Common myeloid progenitor, CD34-positive (primary cell): ENCODE measurements at regions of chr10 and their contacts with region 1.

Region 1: GRCh38 chr10:50624866-50625692 is 1.3 kb upstream of the SGMS1 start:
- DNase-seq: peak; percentile 85 to 92 (median 89)
- H3K4me3 ChIP-seq: peak overlapping the region; percentile 70 to 98 (median 83)
- H3K27ac ChIP-seq: peak overlapping the region; percentile 58 to 97
- H3K4me1 ChIP-seq: peaks cover 23 to 43% (median 35%) of the 10 kb centered on the region in 4 experiments
- H3K27me3 ChIP-seq: no peaks in the 10 kb centered on the region

Region 2: GRCh38 chr10:50577681-50578350 is 47.3 kb before region 1 on chr10:
- CTCF ChIA-PET with region 1: interaction called, 22 read pairs
- POLR2A ChIA-PET with region 1: no interaction called
- DNase-seq: peak; percentile 61 to 88 (median 78)
- H3K4me3 ChIP-seq: peak overlapping the region in 2 of 7 experiments; percentile 8
- H3K27ac ChIP-seq: peak overlapping the region; percentile 4 to 73
- H3K4me1 ChIP-seq: peaks cover 12 to 36% (median 19%) of the 10 kb centered on the region in 4 experiments
- H3K27me3 ChIP-seq: no peaks in the 10 kb centered on the region

Region 3: GRCh38 chr10:50605269-50606263 is 19.5 kb before region 1 on chr10:
- CTCF ChIA-PET with region 1: interaction called, 20 read pairs
- POLR2A ChIA-PET with region 1: interaction called, 4 read pairs
- DNase-seq: peak in 1 of 3 donors; percentile 38
- H3K4me3 ChIP-seq: no peak overlapping the region
- H3K27ac ChIP-seq: no peak overlapping the region
- H3K4me1 ChIP-seq: peaks cover 11 to 35% (median 22%) of the 10 kb centered on the region in 4 experiments
- H3K27me3 ChIP-seq: no peaks in the 10 kb centered on the region

Region 4: DNA sequence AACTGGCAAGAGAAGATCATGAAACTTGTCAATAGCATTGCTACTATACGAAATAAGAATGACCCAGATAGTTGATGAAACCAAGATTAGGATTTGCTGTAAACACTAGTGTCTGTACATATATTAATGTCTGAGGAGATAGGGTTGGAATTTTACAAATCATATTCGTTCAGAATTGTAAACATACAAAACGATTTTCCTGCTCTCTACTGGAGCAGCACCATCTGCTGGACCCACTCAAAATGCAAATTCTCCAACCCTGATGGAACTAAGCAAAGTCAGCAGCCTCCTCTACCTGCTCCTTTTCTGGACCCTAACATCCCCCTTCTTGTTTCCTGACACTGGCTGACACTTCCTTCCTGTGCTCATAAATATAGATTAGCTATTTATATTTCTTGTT is 28.1 kb after region 1 on chr10:
- CTCF ChIA-PET with region 1: interaction called, 16 read pairs
- POLR2A ChIA-PET with region 1: no interaction called
- DNase-seq: peak; percentile 32 to 58 (median 56)
- H3K4me3 ChIP-seq: peak overlapping the region in 3 of 7 experiments; percentile 25 to 63 (median 33)
- H3K27ac ChIP-seq: no peak overlapping the region
- H3K4me1 ChIP-seq: peaks cover 3 to 19% (median 10%) of the 10 kb centered on the region in 4 experiments
- H3K27me3 ChIP-seq: no peaks in the 10 kb centered on the region